ENCODE measurements at regions of chr7 and their contacts with region 1.

Region 1: DNA sequence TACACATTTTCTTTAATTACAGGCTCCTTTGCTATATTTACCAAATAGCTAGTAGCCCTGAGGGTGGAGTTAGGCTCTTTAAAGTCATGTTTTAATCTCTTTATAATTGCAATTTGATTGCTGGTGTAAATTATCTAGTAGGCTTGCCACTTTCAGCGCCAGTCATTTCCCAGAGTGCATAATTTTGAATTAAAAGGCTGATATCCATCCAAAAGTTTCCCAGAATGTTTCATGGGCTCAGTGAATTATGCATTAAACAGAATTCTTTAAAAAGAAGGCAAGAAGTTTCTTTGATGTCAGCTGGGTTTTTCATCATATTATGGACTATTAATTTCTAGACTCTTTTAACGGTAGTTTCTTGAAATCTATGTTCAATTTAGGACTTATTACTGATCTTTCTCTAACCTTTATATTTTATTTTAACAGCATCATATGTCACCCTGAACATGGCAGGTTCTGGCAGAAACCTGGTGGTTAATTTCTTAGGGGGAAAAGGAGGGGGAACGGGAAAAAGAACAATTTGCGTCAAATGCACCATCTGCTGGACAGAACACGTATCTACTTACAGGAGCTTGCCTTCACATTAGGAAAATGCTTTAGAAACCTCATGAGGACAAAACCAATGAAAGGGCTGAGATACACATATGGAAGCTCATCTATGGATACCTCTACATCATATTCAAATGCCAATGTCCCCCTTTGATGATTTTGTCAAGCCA is 171.1 kb downstream of the GRM3 start:
- DNase-seq: peak in 1 of 2 experiments; percentile 32
- H3K4me3 ChIP-seq: no peak overlapping the region
- H3K4me3 Mint-ChIP-seq: no peak overlapping the region
- H3K27ac Mint-ChIP-seq: no peak overlapping the region
- H3K4me1 ChIP-seq: no peaks in the 10 kb centered on the region
- H3K4me1 Mint-ChIP-seq: no peaks in the 10 kb centered on the region
- H3K27me3 ChIP-seq: no peaks in the 10 kb centered on the region
- H3K27me3 Mint-ChIP-seq: no peaks in the 10 kb centered on the region
- CTCF ChIP-seq: peak; percentile 51 to 61

Region 2: GRCh38 chr7:86598311-86598710 is 216.5 kb before region 1 on chr7:
- CTCF ChIA-PET with region 1: interaction called, 4 read pairs
- POLR2A ChIA-PET with region 1: no interaction called
- intact Hi-C with region 1: loop called (anchors 2 kb)
- DNase-seq: peak; percentile 52 to 53
- H3K4me3 ChIP-seq: no peak overlapping the region
- H3K4me3 Mint-ChIP-seq: no peak overlapping the region
- H3K27ac Mint-ChIP-seq: no peak overlapping the region
- H3K4me1 ChIP-seq: no peaks in the 10 kb centered on the region
- H3K4me1 Mint-ChIP-seq: no peaks in the 10 kb centered on the region
- H3K27me3 ChIP-seq: no peaks in the 10 kb centered on the region
- H3K27me3 Mint-ChIP-seq: peaks cover 6% of the 10 kb centered on the region
- CTCF ChIP-seq: peak; percentile 34 to 37

Region 3: DNA sequence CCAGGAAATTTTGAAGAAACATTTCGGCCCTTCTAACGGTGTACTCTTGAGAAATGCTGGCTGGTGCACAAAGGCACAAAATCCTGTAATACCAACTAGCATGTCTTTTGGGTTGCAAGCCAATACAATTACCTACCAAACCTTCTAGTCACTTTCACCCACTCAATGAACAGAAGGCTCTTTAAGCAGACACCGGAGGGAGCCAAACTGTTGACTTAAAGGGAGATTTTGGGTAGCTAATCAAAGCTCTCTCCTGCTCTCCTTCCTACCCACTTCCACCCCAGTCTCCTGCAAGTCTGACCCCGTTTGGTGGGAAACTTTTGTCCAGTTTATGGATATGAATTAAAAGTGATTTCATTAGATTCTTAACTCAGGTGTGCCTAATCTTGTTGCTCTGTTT is 147.1 kb before region 1 on chr7:
- CTCF ChIA-PET with region 1: no interaction called
- POLR2A ChIA-PET with region 1: no interaction called
- intact Hi-C with region 1: loop called (anchors 1 kb)
- DNase-seq: no peak
- H3K4me3 ChIP-seq: no peak overlapping the region
- H3K4me3 Mint-ChIP-seq: no peak overlapping the region
- H3K27ac Mint-ChIP-seq: no peak overlapping the region
- H3K4me1 ChIP-seq: 0 out of 2 replicates have a peak, but pooled peaks cover 3% of the 10 kb centered on the region
- H3K4me1 Mint-ChIP-seq: no peaks in the 10 kb centered on the region
- H3K27me3 ChIP-seq: no peaks in the 10 kb centered on the region
- H3K27me3 Mint-ChIP-seq: peaks cover 3% of the 10 kb centered on the region
- CTCF ChIP-seq: peak in 1 of 2 experiments; percentile 5

Region 4: GRCh38 chr7:86768967-86769760 is 45.7 kb before region 1 on chr7:
- CTCF ChIA-PET with region 1: no interaction called
- POLR2A ChIA-PET with region 1: no interaction called
- intact Hi-C with region 1: no loop called
- DNase-seq: no peak
- H3K4me3 ChIP-seq: no peak overlapping the region
- H3K4me3 Mint-ChIP-seq: no peak overlapping the region
- H3K27ac Mint-ChIP-seq: no peak overlapping the region
- H3K4me1 ChIP-seq: no peaks in the 10 kb centered on the region
- H3K4me1 Mint-ChIP-seq: no peaks in the 10 kb centered on the region
- H3K27me3 ChIP-seq: no peaks in the 10 kb centered on the region
- H3K27me3 Mint-ChIP-seq: no peaks in the 10 kb centered on the region
- CTCF ChIP-seq: no peak

Region 5: GRCh38 chr7:86837235-86837634 is 22.4 kb after region 1 on chr7:
- CTCF ChIA-PET with region 1: no interaction called
- POLR2A ChIA-PET with region 1: no interaction called
- intact Hi-C with region 1: no loop called
- DNase-seq: no peak
- H3K4me3 ChIP-seq: no peak overlapping the region
- H3K4me3 Mint-ChIP-seq: no peak overlapping the region
- H3K27ac Mint-ChIP-seq: no peak overlapping the region
- H3K4me1 ChIP-seq: 0 out of 2 replicates have a peak, but pooled peaks cover 5% of the 10 kb centered on the region
- H3K4me1 Mint-ChIP-seq: no peaks in the 10 kb centered on the region
- H3K27me3 ChIP-seq: no peaks in the 10 kb centered on the region
- H3K27me3 Mint-ChIP-seq: no peaks in the 10 kb centered on the region
- CTCF ChIP-seq: no peak